Left cardiac atrium (tissue), 4 donors: ENCODE measurements at regions of chr11 and their contacts with region 1.

Region 1: GRCh38 chr11:62542750-62543567 is 3.6 kb downstream of the AHNAK start:
- DNase-seq: peak; percentile 88
- ATAC-seq: peak; percentile 32

Region 2: DNA sequence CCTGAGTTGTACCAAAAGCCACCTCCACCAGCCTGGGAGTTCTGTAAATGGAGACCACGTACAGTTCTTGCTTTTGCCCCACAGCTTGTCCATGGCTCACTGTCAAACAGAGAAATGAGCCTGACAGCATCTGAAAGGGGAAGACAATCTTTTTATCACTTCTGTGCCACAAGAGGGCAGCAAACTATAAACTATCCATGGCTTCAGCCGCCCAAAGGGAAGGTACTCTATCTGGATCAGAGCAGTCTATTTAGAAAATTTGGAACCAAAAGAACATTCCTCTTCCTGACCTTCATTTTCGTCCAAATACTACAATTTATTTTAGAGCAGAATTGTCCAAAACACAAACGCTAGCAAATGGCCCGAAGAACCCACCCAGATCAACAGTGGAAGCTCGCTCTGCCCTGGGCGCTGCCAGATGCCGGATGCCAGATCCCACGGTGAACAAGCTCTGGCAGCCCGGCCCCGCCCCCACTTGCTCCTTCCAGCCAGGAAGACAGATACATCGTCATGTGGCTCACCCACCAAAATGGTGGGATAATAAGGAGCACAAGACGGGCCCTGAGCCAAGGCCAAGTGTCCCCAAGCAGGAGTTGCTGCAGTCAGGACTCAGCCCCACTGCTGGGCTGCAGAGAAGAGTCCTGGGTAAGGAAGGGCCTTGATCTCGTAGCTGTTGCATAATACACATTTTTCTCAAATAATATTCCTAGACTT is 148.0 kb before region 1 on chr11:
- intact Hi-C with region 1: loop called in 1 of 2 experiments (anchors 10 kb)
- DNase-seq: peak; percentile 88
- ATAC-seq: peak; percentile 75 to 80

Region 3: DNA sequence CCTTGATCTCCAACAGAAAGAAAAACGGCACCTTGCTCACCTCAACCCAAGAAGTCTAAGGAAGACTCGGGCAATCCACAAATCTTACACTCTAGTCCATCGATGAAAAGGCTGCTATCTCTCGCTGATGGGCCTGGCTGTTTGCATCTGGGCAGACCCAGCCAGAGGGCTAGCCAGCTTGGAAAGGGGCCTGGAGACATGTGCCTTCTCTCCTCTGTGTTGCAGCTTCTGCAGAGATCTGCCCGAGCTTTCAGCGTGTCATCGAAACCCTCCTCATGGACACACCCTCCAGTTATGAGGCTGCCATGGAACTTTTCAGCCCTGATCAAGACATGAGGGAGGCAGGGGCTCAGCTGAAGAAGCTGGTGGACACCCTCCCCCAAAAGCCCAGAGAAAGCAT is 121.0 kb before region 1 on chr11:
- intact Hi-C with region 1: loop called in 1 of 2 experiments (anchors 5 kb)
- DNase-seq: no peak
- ATAC-seq: no peak

Region 4: GRCh38 chr11:62501432-62502379 is 41.3 kb before region 1 on chr11:
- intact Hi-C with region 1: loop called (anchors 5 kb)
- DNase-seq: peak; percentile 57
- ATAC-seq: peak; percentile 24 to 40

Region 5: DNA sequence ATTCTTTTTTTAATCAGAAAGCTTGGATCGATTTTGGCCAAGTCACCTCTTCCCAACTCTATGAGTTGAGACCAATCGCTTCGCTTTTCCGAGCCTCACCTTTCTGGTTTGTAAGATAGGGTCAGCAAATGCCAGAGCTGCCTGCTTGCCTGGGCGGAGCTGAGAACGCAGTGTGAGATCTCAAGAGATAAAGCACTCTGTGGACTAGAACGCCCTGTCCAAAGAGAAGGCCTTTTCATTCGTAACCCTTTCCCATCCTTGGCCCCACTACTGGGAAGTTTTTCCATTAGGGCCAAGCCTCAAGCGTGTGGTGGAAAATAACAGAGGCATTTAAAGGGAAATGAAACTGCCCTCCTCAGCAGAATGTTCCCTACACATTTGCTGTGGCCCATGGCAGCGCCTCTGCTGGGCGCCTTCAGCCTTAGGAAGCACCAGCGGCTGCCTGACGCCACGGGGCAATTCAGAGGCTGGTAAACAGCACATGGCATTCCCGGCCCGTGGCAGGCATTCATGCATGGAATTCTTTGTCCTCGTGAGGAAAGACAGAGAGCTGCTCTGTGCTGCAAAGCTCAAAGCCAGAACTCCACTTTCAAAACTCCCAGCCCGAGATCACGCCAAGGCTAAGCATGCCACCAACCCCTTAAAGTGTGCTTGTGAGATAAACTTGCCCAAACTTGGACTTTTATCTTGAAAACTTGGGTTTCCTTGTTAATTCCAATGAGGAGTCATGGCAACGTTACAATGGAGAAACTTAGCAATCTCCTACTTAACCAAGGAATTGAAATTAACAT is 34.5 kb before region 1 on chr11:
- intact Hi-C with region 1: loop called (anchors 5 kb)
- DNase-seq: peak; percentile 79
- ATAC-seq: peak; percentile 86 to 88

Region 6: GRCh38 chr11:62532096-62532495 is 10.9 kb before region 1 on chr11:
- intact Hi-C with region 1: no loop called
- DNase-seq: no peak
- ATAC-seq: no peak